Psoas muscle (tissue), 8 donors: ENCODE measurements at regions of chr17 and their contacts with region 1.

Region 1: DNA sequence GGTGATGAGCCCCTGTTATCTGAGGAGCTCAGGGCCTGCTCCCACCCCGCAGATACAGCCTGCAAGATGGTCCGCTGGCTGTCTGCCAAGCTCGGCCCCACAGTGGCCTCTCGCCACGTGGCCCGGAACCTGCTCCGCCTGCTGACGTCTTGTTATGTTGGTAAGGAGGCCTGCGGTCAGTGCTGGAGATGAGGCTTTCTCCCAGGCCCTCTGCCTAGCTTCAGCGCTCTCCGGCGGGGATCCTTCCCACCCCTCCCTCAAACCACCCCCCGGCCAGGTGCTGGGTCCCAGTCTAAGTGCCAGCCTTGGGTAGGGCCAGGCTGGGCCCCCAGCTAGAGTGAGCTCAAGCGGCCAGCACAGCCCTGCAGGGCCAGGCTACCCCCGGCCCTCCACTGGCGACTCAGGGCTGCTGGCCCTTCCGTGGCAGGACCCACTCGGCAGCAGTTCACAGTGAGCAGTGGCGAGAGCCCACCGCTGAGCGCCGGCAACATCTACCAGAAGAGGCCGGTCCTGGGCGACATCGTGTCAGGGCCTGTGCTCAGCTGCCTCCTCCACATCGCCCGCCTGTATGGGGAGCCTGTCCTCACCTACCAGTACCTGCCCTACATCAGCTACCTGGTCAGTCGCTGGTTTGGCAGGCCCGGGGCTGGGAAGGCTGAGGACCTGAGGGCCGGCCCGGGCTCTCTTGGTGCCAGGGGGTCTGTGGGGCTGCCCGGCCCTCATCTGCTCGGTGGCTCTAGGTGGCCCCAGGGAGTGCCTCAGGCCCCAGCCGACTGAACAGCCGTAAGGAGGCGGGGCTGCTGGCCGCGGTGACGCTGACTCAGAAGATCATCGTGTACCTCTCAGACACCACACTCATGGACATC is 6.1 kb downstream of the WDR81 start:
- DNase-seq: peak; percentile 92 to 96
- ATAC-seq: peak; percentile 90 to 92 (median 92)
- H3K4me3 ChIP-seq: peak overlapping the region; percentile 49
- H3K27ac ChIP-seq: peak overlapping the region; percentile 94
- H3K4me1 ChIP-seq: peaks cover 49% of the 10 kb centered on the region
- H3K27me3 ChIP-seq: no peaks in the 10 kb centered on the region
- CTCF ChIP-seq: no peak

Region 2: GRCh38 chr17:1529863-1530262 is 200.7 kb before region 1 on chr17:
- intact Hi-C with region 1: no loop called
- DNase-seq: no peak
- ATAC-seq: no peak
- H3K4me3 ChIP-seq: no peak overlapping the region
- H3K27ac ChIP-seq: no peak overlapping the region
- H3K4me1 ChIP-seq: peaks cover 29% of the 10 kb centered on the region
- H3K27me3 ChIP-seq: no peaks in the 10 kb centered on the region
- CTCF ChIP-seq: no peak

Region 3: DNA sequence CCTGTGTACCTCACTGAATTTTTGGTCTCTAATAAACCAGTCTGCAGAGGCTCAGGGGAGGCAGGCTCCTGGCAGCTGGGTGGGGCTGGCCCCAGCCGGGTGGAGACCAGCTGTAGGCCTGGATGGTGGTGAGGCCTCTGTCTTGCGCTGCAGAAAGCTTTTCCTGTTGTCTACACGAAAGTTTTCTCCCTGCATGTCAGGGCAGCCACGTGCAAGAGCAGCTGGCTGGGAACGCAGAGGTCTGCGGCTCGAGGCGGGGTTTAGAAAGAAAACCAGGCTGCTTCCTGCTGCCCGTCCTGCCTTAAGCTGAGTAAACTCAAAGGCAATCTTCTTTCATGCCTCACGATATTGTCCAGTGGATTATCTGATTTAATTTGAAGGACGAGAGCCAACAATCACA is 33.7 kb after region 1 on chr17:
- intact Hi-C with region 1: loop called (anchors 2 to 5 kb)
- DNase-seq: peak; percentile 77 to 89
- ATAC-seq: peak; percentile 19 to 42 (median 32)
- H3K4me3 ChIP-seq: peak overlapping the region; percentile 71
- H3K27ac ChIP-seq: peak overlapping the region; percentile 92
- H3K4me1 ChIP-seq: peaks cover 51% of the 10 kb centered on the region
- H3K27me3 ChIP-seq: no peaks in the 10 kb centered on the region
- CTCF ChIP-seq: no peak